Dendritic cell treated with granulocyte-macrophage colony-stimulating factor and Interleukin-4, amounts not matched to agents 40 ng/mL and 50 ng/mL, for 4 days (primary cell): ENCODE measurements at regions of chr3 and their contacts with region 1.

Region 1: DNA sequence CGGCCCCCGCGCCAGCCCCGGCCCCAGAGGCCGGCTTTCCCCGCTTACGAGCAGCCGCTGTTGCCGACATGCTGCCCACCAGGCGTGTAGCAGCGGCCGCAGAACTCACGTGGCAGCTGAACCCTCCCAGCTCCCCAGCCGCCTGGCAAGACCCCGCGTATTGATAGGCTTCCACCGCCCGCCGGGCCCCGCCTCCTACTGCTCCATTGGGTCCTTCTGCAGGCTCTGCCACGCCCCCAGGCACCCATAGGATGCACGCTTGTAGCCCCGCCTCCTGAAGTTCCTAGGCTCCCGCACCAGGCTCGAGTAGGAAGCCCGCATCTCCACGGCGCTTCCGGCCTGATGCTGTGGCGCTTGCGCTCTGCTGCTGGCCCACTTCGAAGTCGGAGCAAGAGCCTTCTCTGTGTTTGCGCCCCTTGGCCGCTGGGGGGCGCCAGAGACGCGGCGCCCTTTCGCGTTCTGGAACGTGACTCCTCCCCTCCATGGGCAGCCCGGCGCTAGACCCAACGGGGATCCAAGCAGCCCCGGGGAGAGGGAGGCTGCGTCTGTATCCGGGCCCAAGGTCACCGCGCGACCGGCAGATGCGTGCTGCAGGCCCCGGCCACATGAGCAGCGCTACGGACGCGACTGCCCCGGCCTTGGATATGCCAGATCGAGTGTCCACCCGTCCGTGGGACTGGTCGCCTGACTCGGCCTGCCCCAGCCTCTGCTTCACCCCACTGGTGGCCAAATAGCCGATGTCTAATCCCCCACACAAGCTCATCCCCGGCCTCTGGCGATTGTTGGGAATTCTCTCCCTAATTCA is at the starts of genes PARP3 and RRP9:
- H3K4me3 Mint-ChIP-seq: peak within 1 kb of the TSS; percentile 82
- H3K27ac Mint-ChIP-seq: peak within 1 kb of the TSS; percentile 85
- H3K4me1 Mint-ChIP-seq: peaks cover 48% of the 10 kb centered on the region
- H3K27me3 Mint-ChIP-seq: no peaks in the 10 kb centered on the region

Region 2: GRCh38 chr3:51819709-51820406 is 122.1 kb before region 1 on chr3:
- intact Hi-C with region 1: no loop called
- H3K4me3 Mint-ChIP-seq: no peak overlapping the region
- H3K27ac Mint-ChIP-seq: no peak overlapping the region
- H3K4me1 Mint-ChIP-seq: no peaks in the 10 kb centered on the region
- H3K27me3 Mint-ChIP-seq: peaks cover 18% of the 10 kb centered on the region

Region 3: GRCh38 chr3:51974963-51975851 is 33.2 kb after region 1 on chr3 and contains the start of gene ABHD14A:
- intact Hi-C with region 1: loop called (anchors 1 kb)
- H3K4me3 Mint-ChIP-seq: peak within 1 kb of the TSS; percentile 92
- H3K27ac Mint-ChIP-seq: peak within 1 kb of the TSS; percentile 96
- H3K4me1 Mint-ChIP-seq: peaks cover 44% of the 10 kb centered on the region
- H3K27me3 Mint-ChIP-seq: no peaks in the 10 kb centered on the region

Region 4: GRCh38 chr3:51995346-51996163 is 53.6 kb after region 1 on chr3 and contains the start of gene RPL29:
- intact Hi-C with region 1: loop called (anchors 1 kb)
- H3K4me3 Mint-ChIP-seq: peak within 1 kb of the TSS; percentile 99
- H3K27ac Mint-ChIP-seq: peak within 1 kb of the TSS; percentile 92
- H3K4me1 Mint-ChIP-seq: peaks cover 24% of the 10 kb centered on the region
- H3K27me3 Mint-ChIP-seq: peaks cover 9% of the 10 kb centered on the region